Adrenal gland (tissue), 19 donors: ENCODE measurements at regions of chr11 and their contacts with region 1.

Region 1: GRCh38 chr11:61446211-61446651 is 16.3 kb downstream of the SDHAF2 start:
- DNase-seq: peak; percentile 90 to 97 (median 94)
- H3K4me3 ChIP-seq: no peak overlapping the region
- H3K27ac ChIP-seq: peak overlapping the region in 2 of 5 donors; percentile 25 to 57
- H3K4me1 ChIP-seq: peaks cover 0 to 27% of the 10 kb centered on the region in 2 donors
- H3K27me3 ChIP-seq: no peaks in the 10 kb centered on the region
- CTCF ChIP-seq: peak; percentile 70 to 90 (median 82)
- POLR2A ChIP-seq: no peak

Region 2: GRCh38 chr11:61516675-61517572 is 70.7 kb after region 1 on chr11:
- intact Hi-C with region 1: loop called in 1 of 2 experiments (anchors 2 kb)
- DNase-seq: peak in 3 of 7 donors; percentile 32 to 65 (median 42)
- H3K4me3 ChIP-seq: no peak overlapping the region
- H3K27ac ChIP-seq: no peak overlapping the region
- H3K4me1 ChIP-seq: peaks cover 0 to 6% of the 10 kb centered on the region in 2 donors
- H3K27me3 ChIP-seq: no peaks in the 10 kb centered on the region
- CTCF ChIP-seq: peak; percentile 89 to 99 (median 96)
- POLR2A ChIP-seq: no peak

Region 3: DNA sequence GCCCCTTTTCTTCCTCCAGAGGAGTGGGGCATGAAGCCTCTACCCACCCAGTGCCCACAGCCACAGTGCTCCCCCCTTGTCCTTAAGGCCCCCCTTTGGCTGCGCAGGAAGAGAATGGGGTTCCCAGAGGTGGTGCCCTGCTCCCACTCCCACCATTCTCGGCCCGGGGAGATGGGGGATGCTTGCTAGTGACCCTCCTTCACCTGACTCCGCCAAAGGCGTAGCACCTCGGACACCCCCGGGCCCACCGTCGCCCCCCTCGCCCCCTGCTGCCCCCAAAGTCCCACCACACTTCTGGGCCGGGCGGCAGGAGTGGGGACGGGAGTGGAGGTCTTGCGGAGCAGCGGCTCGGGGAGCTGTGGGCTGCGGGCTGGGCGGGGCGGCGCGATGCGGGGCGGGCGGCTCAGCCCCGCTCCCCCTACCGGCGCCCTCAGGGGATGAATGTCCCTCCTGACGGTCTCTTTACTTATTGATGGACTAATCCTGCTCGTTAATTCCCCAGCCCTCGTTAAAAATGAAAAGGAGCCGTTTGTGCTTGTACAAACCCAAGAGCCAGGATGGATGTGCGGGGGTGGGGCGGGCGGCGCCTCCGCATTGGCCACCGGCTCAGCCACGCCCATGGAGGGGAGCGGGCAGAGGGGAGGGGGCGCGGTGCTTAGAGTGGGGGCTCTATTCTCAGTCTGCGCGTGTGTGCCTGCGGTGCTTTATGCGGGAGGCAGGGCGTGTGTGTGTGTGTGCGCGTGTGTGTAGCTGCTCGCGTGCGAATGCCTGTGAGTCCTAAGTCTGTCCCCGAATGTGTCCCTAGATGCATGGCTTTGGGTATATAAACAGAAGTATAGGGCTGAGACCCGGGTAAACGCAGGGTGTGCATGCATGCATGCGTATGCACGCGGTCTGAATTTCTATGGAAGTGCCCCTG is 109.1 kb after region 1 on chr11:
- intact Hi-C with region 1: no loop called
- DNase-seq: no peak
- H3K4me3 ChIP-seq: no peak overlapping the region
- H3K27ac ChIP-seq: peak overlapping the region in 1 of 5 donors; percentile 34
- H3K4me1 ChIP-seq: no peaks in the 10 kb centered on the region
- H3K27me3 ChIP-seq: peaks cover 23% of the 10 kb centered on the region
- CTCF ChIP-seq: no peak
- POLR2A ChIP-seq: no peak

Region 4: DNA sequence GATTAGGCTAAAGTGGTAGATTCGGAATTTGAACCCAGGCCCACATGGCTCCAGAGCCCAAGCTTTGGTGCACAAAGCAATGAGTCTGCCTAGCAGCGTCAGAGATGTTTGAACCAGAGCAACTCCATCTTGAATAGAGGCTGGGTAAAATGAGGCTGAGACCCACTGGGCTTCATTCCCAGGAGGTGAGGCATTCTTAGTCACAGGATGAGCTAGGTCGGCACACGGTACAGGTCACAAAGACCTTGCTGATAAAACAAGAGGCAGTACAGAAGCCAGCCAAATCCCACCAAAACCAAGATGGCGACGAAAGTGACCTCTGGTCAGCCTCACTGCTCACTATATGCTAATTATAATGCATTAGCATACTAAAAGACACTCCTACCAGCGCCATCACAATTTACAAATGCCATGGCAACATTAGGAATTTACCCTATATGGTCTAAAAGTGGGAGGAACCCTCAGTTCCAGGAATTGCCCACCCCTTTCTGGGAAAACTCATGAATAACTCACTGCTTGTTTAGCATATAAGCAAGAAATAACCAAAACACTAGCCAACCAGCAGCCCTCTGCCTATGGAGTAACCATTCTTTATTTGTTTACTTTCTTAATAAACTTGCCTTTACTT is 193.7 kb after region 1 on chr11:
- intact Hi-C with region 1: loop called in 1 of 2 experiments (anchors 10 kb)
- DNase-seq: peak in 1 of 7 donors; percentile 35
- H3K4me3 ChIP-seq: no peak overlapping the region
- H3K27ac ChIP-seq: no peak overlapping the region
- H3K4me1 ChIP-seq: peaks cover 0 to 12% of the 10 kb centered on the region in 2 donors
- H3K27me3 ChIP-seq: no peaks in the 10 kb centered on the region
- CTCF ChIP-seq: no peak
- POLR2A ChIP-seq: no peak